Caco-2 (cell line): ENCODE measurements at regions of chr6 and their contacts with region 1.

Region 1: DNA sequence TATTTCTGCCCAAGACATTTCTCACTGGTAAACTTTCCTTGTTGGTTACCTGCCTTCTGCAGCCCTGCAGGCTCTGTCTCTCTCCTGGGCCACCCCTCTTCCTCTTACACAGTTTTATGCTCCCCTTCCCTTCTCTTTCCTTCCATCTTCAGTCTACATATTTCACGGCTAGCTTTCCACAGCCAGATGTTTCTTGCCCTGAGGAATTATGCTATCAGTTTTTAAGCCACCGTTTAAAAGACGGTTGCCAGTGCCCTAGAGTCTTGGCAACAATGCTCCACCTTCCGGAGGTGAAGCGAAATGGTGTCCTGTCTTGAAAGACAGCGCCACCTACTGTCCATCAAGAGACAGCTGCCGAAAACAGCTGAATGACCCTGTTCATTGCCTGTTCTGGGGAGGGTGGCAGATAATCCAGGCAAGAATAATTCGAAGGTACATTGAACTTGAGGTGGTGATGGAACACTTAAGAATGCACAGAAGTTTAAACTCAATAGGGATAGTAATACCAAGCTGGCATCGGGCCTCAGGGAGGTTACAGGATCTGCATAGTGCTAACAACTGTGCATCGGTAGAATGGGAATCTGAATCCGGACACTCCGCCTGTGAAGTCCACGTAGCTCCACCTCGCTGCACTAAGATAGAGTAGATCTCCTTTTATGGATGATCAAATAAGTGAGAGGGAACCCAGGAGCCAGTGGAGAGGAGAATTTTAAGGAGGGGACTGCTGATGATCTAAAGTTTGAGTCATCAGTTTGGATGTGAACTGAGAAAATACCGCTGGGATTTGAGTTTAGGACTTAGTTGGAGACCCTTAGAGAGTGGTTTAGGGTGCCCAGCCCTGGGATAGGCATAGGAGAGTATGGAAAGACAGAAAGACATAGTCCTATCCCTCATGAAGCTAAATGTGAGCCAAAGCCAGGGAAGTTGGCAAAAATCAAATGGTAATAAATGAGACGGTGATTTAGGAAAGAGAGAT is 4.8 kb upstream of the TRIM40 start:
- DNase-seq: peak; percentile 75 to 83
- H3K4me3 ChIP-seq: no peak overlapping the region
- H3K4me3 Mint-ChIP-seq: peak overlapping the region; percentile 54
- H3K27ac Mint-ChIP-seq: peak overlapping the region; percentile 44
- H3K4me1 ChIP-seq: peaks cover 21% of the 10 kb centered on the region
- H3K4me1 Mint-ChIP-seq: peaks cover 18% of the 10 kb centered on the region
- H3K27me3 ChIP-seq: no peaks in the 10 kb centered on the region
- H3K27me3 Mint-ChIP-seq: no peaks in the 10 kb centered on the region
- CTCF ChIP-seq: peak; percentile 97 to 99

Region 2: DNA sequence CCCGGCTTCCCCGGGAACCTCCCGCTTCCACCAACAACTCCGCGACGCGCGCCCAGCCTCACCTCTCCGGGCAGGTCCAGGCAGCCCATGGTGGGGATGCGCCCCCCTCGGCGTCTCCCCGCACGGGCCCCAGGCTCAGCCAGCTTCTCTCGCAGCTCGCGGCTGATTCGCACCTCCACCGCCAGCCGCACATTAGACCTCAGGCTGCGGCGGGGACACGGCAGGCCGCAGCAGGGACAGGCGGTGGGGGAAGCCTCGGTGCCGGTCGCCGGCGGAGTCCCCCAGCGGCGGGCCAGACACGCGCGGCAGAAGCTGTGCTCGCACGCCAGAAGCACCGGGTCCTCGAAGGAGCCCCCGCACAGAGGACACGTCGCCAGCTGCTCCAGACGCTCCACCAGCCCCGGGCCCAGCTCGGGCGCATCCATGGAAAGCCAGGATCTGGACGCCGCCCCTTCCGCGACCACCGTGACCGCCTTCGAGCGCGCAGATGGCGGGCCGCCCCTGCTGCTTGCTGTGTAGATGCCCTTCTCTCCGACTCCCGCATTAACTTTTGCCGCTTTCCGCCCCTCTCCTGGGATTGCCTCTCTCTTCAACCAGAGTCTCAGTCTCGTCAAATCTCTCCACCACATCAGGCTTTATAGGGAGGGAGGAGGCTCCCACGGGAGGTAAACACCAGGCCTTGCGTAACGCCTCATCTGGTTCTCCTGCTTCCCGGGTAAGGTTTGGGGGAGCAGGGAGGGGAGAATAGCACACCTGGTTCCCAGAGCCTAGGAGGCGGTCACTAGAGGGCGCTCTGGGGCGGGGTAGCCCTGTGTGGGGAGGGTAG is 55.8 kb before region 1 on chr6 and contains the start of gene RNF39:
- CTCF ChIA-PET with region 1: no interaction called
- POLR2A ChIA-PET with region 1: no interaction called
- intact Hi-C with region 1: loop called (anchors 2 kb)
- DNase-seq: peak in 1 of 2 experiments; percentile 51
- H3K4me3 ChIP-seq: peak within 1 kb of the TSS; percentile 51
- H3K4me3 Mint-ChIP-seq: peak within 1 kb of the TSS; percentile 80
- H3K27ac Mint-ChIP-seq: peak within 1 kb of the TSS; percentile 27
- H3K4me1 ChIP-seq: peaks cover 8% of the 10 kb centered on the region
- H3K4me1 Mint-ChIP-seq: peaks cover 12% of the 10 kb centered on the region
- H3K27me3 ChIP-seq: no peaks in the 10 kb centered on the region
- H3K27me3 Mint-ChIP-seq: peaks cover 11% of the 10 kb centered on the region
- CTCF ChIP-seq: peak in 1 of 2 experiments; percentile 62
- total RNA-seq, gene RNF39: 0.23 and 0.37 TPM in 2 replicates